ENCODE measurements at regions of chr1 and their contacts with region 1.

Region 1: DNA sequence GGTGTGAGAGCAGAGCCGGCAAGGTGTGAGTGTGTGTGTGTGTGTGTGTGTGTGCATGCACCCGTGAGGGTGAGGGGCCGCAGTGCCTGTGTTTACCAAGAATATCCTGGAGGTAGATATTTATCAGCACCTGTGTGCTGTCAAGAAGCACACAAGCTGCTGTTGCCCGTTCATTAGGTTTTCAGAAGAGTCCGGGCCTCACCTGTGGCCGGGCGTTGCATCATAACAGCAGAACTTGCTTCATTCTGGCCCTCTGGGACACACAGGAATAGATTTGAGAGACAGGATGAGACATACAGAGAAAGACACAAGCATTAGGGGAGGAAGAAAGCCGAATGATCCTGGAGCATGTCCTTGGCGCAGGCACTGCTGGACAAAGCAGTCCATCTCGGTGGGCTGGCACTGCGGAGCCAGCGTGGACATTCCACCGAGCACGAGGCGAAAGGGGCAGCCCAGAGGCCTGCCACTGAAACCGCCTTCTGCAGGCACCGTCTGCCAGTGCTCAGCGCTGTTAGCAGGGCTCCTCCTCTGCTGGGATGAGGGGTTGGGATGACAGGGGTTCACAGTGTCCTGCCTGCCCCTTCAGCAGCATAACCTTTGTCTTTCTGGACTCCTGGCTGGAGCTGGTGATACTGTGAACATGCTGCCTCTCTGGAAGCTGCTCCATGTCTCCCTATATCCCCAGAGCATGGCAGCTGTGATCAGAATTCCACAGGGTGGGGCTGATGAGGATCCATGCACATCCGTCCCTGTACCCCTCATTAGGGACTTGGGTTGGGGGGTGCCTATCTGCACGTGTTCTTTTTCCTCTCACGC is 81.1 kb downstream of the PEX14 start:
- DNase-seq: no peak

Region 2: GRCh38 chr1:10324627-10325026 is 231.2 kb before region 1 on chr1:
- intact Hi-C with region 1: no loop called
- DNase-seq: no peak

Region 3: GRCh38 chr1:10598389-10598702 is 42.5 kb after region 1 on chr1:
- intact Hi-C with region 1: loop called (anchors 5 kb)
- DNase-seq: no peak